Aorta (tissue), 5 donors: ENCODE measurements at regions of chr16 and their contacts with region 1.

Region 1: GRCh38 chr16:52912565-52913173 is 140.0 kb downstream of the CHD9NB start:
- DNase-seq: peak in 1 of 2 donors; percentile 52
- ATAC-seq: peak; percentile 66
- H3K4me3 ChIP-seq: no peak overlapping the region
- H3K27ac ChIP-seq: no peak overlapping the region
- H3K4me1 ChIP-seq: no peaks in the 10 kb centered on the region
- H3K27me3 ChIP-seq: no peaks in the 10 kb centered on the region

Region 2: GRCh38 chr16:52191531-52192134 is 721.0 kb before region 1 on chr16:
- intact Hi-C with region 1: loop called in 1 of 2 experiments (anchors 5 kb)
- DNase-seq: peak in 1 of 2 donors; percentile 44
- ATAC-seq: peak; percentile 75
- H3K4me3 ChIP-seq: no peak overlapping the region
- H3K27ac ChIP-seq: no peak overlapping the region
- H3K4me1 ChIP-seq: no peaks in the 10 kb centered on the region
- H3K27me3 ChIP-seq: peaks cover 0 to 2% of the 10 kb centered on the region in 2 donors